ENCODE measurements at regions of chr1 and their contacts with region 1.

Region 1: GRCh38 chr1:31394628-31395193 is 18.3 kb upstream of the SERINC2 start:
- DNase-seq: peak; percentile 93
- ATAC-seq: peak; percentile 94
- H3K4me3 ChIP-seq: peak overlapping the region; percentile 43; the same call in 1 of the 2 replicates
- H3K27ac ChIP-seq: no peak overlapping the region
- H3K4me1 ChIP-seq: peaks cover 15% of the 10 kb centered on the region
- H3K27me3 ChIP-seq: no peaks in the 10 kb centered on the region
- CTCF ChIP-seq: peak; percentile 89

Region 2: GRCh38 chr1:31372961-31373896 is 21.5 kb before region 1 on chr1 and contains the start of gene FABP3:
- CTCF ChIA-PET with region 1: interaction called, 22 read pairs
- POLR2A ChIA-PET with region 1: no interaction called
- intact Hi-C with region 1: no loop called
- DNase-seq: peak; percentile 46
- ATAC-seq: peak; percentile 65
- H3K4me3 ChIP-seq: peak within 1 kb of the TSS; percentile 60
- H3K27ac ChIP-seq: peak within 1 kb of the TSS; percentile 6; the same call in 1 of the 2 replicates
- H3K4me1 ChIP-seq: peaks cover 38% of the 10 kb centered on the region
- H3K27me3 ChIP-seq: no peaks in the 10 kb centered on the region
- CTCF ChIP-seq: no peak
- total RNA-seq, gene FABP3: 0.40 TPM in 1 of 2 replicates, not detected in the other

Region 3: GRCh38 chr1:31422505-31423319 is 28.0 kb after region 1 on chr1:
- CTCF ChIA-PET with region 1: interaction called, 7 read pairs
- POLR2A ChIA-PET with region 1: no interaction called
- intact Hi-C with region 1: loop called (anchors 1 kb)
- DNase-seq: peak; percentile 94
- ATAC-seq: peak; percentile 96
- H3K4me3 ChIP-seq: peak overlapping the region; percentile 14; the same call in 1 of the 2 replicates
- H3K27ac ChIP-seq: peak overlapping the region; percentile 72
- H3K4me1 ChIP-seq: peaks cover 35% of the 10 kb centered on the region
- H3K27me3 ChIP-seq: no peaks in the 10 kb centered on the region
- CTCF ChIP-seq: peak; percentile 94

Region 4: DNA sequence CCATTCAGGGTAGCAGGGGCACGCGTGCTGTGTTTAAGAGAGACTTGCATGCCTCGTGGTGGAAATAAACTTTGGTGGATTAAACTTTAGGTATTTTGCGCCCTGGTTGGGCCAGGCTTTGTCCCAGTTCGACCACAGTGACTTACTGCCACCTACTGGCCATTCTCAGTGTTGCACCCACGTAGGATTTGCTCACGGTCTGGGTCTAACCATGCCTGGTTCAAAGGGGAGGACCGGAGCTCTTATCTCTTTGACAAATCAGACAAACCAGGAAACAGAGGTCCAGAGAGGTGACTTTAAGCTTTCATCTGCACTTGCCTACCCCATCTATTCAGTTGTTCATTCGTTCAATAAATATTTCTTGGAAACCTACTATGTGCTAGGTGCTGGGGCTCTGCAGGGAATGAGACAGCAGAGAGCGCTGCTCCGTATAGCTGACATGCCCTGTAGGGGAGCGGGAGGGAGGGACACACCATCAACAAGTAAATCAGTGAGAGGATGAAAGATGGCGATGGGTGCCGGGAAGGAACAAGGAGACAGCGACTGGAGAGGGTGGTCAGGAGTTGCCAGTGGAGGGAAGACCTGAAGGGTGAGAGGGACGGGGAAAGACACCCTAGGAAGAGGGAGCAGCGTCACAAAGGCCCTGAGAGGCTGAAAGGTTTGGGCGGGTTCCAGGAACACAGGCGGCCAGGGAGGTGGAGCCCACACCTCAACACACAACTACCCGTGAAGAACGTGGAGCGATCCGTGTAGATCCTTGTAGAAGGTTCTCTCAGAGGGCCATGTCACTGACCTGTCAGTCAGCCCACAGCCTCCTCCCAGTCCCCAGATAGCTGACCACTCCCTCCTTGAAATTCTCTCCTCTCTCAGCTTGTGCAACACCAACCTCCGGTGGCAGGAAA is 154.4 kb after region 1 on chr1:
- CTCF ChIA-PET with region 1: interaction called, 10 read pairs
- POLR2A ChIA-PET with region 1: no interaction called
- intact Hi-C with region 1: loop called (anchors 1 kb)
- DNase-seq: peak; percentile 97
- ATAC-seq: peak; percentile 86
- H3K4me3 ChIP-seq: peak overlapping the region; percentile 55
- H3K27ac ChIP-seq: peak overlapping the region; percentile 74
- H3K4me1 ChIP-seq: peaks cover 24% of the 10 kb centered on the region
- H3K27me3 ChIP-seq: no peaks in the 10 kb centered on the region
- CTCF ChIP-seq: peak; percentile 96

Measured in PC-3 (cell line).